ENCODE measurements at regions of chr3 and their contacts with region 1.

Region 1: DNA sequence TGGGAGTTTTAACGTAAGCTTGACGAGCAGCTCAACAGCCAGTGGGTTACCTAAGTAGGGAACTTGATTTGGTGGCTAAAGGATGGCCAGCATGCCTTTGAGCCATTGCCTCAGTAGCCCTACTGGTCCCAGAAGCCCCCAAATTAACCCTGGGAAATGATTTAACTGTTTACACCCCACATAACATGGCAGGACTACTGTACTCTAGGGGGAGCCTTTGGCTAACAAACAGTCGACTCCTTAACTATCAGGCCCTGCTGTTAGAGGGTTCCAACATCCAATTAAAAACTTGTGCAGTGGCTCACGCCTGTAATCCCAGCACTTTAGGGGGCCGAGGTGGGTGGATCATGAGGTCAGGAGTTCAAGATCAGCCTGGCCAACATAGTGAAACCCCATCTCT is 9.4 kb upstream of the SMCO1 start:
- DNase-seq: no peak
- ATAC-seq: no peak

Region 2: DNA sequence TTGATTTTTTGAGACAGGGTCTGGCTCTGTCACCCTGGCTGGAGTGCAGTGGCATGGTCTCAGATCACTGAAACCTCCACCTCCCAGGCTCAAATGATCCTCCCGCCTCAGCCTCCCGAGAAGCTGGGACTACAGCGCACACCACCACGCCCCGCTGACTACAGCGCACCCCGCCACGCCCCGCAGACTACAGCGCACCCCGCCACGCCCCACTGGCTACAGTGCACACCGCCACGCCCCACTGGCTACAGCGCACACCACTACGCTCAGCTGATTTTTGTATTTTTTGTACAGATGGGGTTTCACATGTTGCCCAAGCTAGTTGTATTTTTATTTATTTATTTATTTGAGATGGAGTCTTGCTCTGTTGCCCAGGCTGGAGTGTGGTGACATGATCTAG is 272.6 kb before region 1 on chr3:
- intact Hi-C with region 1: loop called in 1 of 2 experiments (anchors 5 kb)
- DNase-seq: no peak
- ATAC-seq: peak; percentile 36

Region 3: DNA sequence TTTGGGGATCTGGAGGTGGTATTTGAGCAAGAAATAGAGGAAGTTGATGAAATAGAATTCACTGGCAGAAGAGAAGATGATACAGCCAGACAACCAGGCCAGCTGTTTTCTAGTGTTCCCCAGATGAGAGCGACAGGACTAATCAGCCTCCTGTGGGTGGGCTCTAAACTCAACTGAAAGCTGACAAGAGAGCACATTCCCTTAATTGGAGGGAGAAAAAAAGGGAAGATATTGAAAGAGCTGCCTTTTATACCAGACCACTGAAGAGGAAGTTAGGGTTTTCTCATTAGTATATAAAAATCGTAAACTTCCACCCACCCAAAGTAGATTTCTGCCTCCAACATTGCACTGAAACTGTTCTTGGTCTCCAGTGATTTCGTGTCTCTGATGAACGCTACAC is 179.9 kb before region 1 on chr3:
- intact Hi-C with region 1: no loop called
- DNase-seq: no peak
- ATAC-seq: no peak

Measured in left colon (tissue), 2 donors.